ENCODE measurements at regions of chr17 and their contacts with region 1.

Region 1: GRCh38 chr17:27805520-27806146 is 5.3 kb upstream of the NOS2 start:
- DNase-seq: peak; percentile 88
- H3K4me3 Mint-ChIP-seq: peak overlapping the region; percentile 68
- H3K27ac Mint-ChIP-seq: peak overlapping the region; percentile 88
- H3K4me1 Mint-ChIP-seq: peaks cover 7% of the 10 kb centered on the region
- H3K27me3 Mint-ChIP-seq: no peaks in the 10 kb centered on the region
- CTCF ChIP-seq: peak; percentile 71

Region 2: GRCh38 chr17:27818401-27819105 is 12.9 kb after region 1 on chr17:
- CTCF ChIA-PET with region 1: interaction called, 12 read pairs
- POLR2A ChIA-PET with region 1: interaction called, 4 read pairs
- intact Hi-C with region 1: no loop called
- DNase-seq: no peak
- H3K4me3 Mint-ChIP-seq: no peak overlapping the region
- H3K27ac Mint-ChIP-seq: no peak overlapping the region
- H3K4me1 Mint-ChIP-seq: no peaks in the 10 kb centered on the region
- H3K27me3 Mint-ChIP-seq: no peaks in the 10 kb centered on the region
- CTCF ChIP-seq: no peak

Region 3: GRCh38 chr17:27862004-27862403 is 56.4 kb after region 1 on chr17:
- CTCF ChIA-PET with region 1: interaction called, 6 read pairs
- POLR2A ChIA-PET with region 1: interaction called, 4 read pairs
- intact Hi-C with region 1: loop called (anchors 5 kb)
- DNase-seq: peak; percentile 65
- H3K4me3 Mint-ChIP-seq: no peak overlapping the region
- H3K27ac Mint-ChIP-seq: no peak overlapping the region
- H3K4me1 Mint-ChIP-seq: peaks cover 5% of the 10 kb centered on the region
- H3K27me3 Mint-ChIP-seq: peaks cover 60% of the 10 kb centered on the region
- CTCF ChIP-seq: no peak

Region 4: DNA sequence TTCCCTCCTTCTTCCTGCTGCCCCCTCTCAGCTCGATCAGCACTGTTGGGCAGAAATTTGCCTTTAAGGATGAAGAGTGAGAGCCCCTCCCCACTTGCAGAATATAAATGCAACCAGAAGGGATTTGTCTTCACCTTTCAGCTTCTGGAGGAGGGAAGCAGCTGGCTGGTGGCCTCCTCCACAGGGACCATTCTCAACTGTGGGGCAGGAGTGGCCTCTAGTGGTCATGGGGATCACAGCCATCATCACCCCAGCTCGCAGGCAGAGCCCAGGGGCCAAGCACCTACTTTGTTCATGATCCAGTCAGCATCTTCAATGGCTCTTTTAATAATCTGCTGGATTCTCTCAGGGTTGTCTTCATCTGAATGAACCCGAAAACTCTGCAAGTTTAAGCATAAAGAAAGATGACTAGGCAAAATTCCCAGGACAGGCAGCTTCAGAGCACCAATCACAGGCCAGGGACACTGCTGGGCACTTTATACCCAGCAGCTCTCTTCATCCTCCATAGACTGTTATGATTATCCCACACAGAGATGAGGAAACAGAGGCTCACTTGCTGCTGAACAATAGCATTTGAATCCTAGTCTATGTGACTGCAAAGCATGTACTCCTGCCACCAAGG is 74.5 kb after region 1 on chr17:
- CTCF ChIA-PET with region 1: interaction called, 445 read pairs
- POLR2A ChIA-PET with region 1: interaction called, 24 read pairs
- intact Hi-C with region 1: loop called (anchors 1 kb)
- DNase-seq: peak; percentile 77
- H3K4me3 Mint-ChIP-seq: no peak overlapping the region
- H3K27ac Mint-ChIP-seq: no peak overlapping the region
- H3K4me1 Mint-ChIP-seq: no peaks in the 10 kb centered on the region
- H3K27me3 Mint-ChIP-seq: no peaks in the 10 kb centered on the region
- CTCF ChIP-seq: peak; percentile 89